Activated T-helper 1 cell treated with anti-CD3 and anti-CD28 coated beads, Interleukin-12 subunit alpha, Interleukin-12 subunit beta, Interleukin-2, Interleukin-4 antibody, amounts not matched to agents 30 ng/mL and 10 ng/mL and 1 ng/mL, durations not matched to agents 14 hours and 24 hours and 36 hours (primary cell): ENCODE measurements at regions of chr12 and their contacts with region 1.

Region 1: GRCh38 chr12:123633379-123634141 is at the starts of genes EIF2B1 and GTF2H3:
- DNase-seq: peak; percentile 96
- H3K4me3 Mint-ChIP-seq: peak within 1 kb of the TSS; percentile 98
- H3K27ac Mint-ChIP-seq: peak within 1 kb of the TSS; percentile 97
- H3K4me1 Mint-ChIP-seq: peaks cover 35% of the 10 kb centered on the region
- H3K27me3 Mint-ChIP-seq: no peaks in the 10 kb centered on the region
- total RNA-seq, gene EIF2B1: 74.8 and 76.5 TPM in 2 replicates
- total RNA-seq, gene GTF2H3: 65.8 and 66.1 TPM in 2 replicates

Region 2: GRCh38 chr12:123601602-123602489 is 31.7 kb before region 1 on chr12 and contains the start of gene DDX55:
- intact Hi-C with region 1: loop called (anchors 1 kb)
- DNase-seq: peak; percentile 83
- H3K4me3 Mint-ChIP-seq: peak within 1 kb of the TSS; percentile 87
- H3K27ac Mint-ChIP-seq: peak within 1 kb of the TSS; percentile 90
- H3K4me1 Mint-ChIP-seq: peaks cover 36% of the 10 kb centered on the region
- H3K27me3 Mint-ChIP-seq: no peaks in the 10 kb centered on the region
- total RNA-seq, gene DDX55: 72.1 and 72.3 TPM in 2 replicates

Region 3: DNA sequence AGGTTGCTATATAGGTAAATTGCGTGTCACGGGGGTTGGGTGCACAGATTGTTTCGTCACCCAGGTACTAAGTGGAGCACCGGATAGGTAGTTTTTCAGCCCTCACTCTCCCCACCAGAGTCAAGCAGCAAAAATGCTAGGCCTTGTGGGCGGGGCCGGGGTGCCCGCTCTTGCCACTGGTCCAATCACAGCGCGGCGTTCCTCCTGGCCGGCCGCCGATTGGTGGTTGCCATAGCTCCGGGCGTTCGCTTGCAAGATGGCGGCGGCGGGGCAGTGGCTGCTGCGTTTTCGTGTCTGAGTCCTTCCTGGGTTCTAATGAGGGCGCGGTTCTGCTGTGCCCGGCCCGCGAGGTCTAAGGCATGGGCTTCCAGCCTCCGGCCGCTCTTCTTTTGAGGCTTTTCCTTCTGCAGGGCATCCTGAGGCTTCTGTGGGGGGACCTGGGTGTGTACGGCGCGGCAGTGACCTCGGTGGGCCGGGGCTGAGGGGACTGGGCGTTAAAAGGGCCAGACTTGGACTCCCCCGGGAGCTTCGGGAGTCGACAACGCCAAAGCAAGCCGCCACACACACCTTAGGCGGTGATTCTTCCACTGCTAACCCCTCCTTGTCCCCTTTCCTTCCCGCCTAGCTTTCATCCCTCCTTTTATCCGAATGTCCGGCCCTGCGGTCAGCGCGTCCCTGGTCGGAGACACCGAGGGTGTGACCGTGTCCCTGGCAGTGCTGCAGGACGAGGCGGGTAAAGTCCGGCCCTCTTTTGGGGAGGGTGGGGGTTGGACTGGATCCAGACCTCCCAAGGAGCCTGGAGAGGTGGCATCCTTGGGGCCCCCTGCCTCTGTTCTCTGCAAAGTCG is 37.5 kb after region 1 on chr12 and contains the start of gene TCTN2:
- intact Hi-C with region 1: loop called (anchors 1 kb)
- DNase-seq: peak; percentile 92
- H3K4me3 Mint-ChIP-seq: peak within 1 kb of the TSS; percentile 88
- H3K27ac Mint-ChIP-seq: peak within 1 kb of the TSS; percentile 18
- H3K4me1 Mint-ChIP-seq: peaks cover 15% of the 10 kb centered on the region
- H3K27me3 Mint-ChIP-seq: no peaks in the 10 kb centered on the region
- total RNA-seq, gene TCTN2: 2.8 and 3.0 TPM in 2 replicates

Region 4: GRCh38 chr12:123761841-123762714 is 128.5 kb after region 1 on chr12 and contains the start of gene DNAH10:
- intact Hi-C with region 1: loop called (anchors 5 kb)
- DNase-seq: peak; percentile 21
- H3K4me3 Mint-ChIP-seq: peak within 1 kb of the TSS; percentile 64
- H3K27ac Mint-ChIP-seq: peak within 1 kb of the TSS; percentile 59
- H3K4me1 Mint-ChIP-seq: no peaks in the 10 kb centered on the region
- H3K27me3 Mint-ChIP-seq: peaks cover 10% of the 10 kb centered on the region
- total RNA-seq, gene DNAH10: 0.12 and 0.31 TPM in 2 replicates

Region 5: DNA sequence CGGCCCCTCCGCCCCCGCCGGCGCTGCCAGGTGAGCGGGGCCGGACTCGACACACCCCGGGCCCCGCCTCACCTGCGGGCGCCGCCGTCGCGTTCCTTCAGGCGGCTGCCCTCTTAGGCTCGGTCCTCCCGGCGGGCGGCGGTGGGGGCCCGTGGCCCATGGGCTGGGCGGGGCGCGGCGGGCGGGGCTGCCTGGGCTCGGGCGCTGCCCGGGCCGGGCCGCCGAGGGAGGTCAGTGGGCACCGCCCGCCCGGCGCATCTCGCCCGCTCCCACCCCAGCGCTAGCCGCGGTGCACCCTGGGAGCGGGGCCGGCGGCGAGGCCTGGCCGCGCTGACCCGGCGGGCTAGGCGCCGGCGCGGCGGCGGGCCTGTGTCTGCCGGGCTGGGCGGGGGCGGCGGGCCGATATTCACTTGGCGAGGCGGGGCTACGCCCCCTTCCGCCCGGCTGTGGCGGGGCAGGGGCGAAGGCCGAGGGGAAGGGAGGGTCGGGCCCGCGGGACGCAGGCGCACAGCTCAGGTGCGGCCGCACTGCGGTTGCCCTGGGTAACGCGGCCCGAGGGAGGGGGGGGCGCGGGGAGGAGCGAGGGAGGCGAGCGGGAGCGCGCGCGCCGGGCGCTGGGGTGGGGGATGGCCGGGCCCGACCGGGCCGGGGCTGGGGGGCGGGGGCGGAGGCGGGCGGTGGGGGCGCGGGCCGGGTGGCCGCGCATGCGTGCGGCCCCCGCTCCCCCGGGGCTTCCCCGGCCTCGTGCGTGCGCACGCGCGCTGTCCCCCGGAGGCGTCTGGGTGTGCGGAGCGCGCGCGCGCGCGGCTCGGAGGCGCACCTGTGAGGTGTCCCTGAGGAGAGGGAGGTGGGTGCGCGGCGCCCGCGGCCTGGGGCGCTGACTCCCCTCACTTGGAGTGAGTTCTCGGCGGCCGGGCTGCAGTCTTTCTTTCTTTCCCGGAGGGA is 339.2 kb after region 1 on chr12 and contains the starts of genes CCDC92 and ZNF664:
- intact Hi-C with region 1: loop called (anchors 5 kb)
- DNase-seq: peak; percentile 91
- H3K4me3 Mint-ChIP-seq: peak within 1 kb of the TSS; percentile 91
- H3K27ac Mint-ChIP-seq: peak within 1 kb of the TSS; percentile 78
- H3K4me1 Mint-ChIP-seq: peaks cover 53% of the 10 kb centered on the region
- H3K27me3 Mint-ChIP-seq: peaks cover 15% of the 10 kb centered on the region
- total RNA-seq, gene CCDC92: 7.7 and 8.3 TPM in 2 replicates
- total RNA-seq, gene ZNF664: 66.9 and 68.1 TPM in 2 replicates